HEK293 (cell line): ENCODE measurements at regions of chr18 and their contacts with region 1.

Region 1: DNA sequence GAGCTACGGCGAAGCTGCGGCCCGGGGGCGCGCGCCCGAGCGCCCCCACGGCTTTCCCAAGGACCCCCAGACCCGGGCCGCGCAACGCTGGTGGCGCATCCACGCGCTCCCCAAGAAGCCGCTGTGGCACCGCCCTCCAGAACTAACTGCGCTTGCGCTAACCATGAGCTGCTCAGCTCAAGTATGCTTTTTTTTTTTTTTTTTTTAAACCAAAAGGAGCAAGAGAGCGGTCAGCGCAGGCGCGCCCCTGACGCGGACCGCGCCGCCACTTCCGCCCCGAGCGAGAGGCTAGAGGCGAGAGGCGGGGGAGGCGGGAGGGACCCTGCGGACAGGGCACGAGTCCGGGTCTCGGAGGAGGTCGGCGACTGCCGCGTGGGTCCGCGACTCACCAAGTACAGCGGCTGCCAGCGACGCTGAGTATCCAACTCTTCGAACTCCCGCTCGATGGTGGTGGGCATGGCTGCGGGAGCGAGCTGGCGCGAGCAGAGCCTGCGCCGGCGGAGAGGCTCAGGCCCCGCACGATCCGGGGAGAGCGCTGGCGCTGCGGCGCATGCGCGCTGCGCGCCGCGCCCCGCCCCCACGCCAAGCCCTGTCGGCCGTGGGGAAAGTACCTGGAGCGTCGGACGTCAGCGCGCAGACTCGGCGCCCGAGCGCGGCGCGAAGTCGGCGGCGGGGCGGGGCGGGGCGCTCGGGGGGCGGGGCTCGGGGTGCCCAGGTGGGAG is at the start of gene PTPN2:
- H3K4me3 ChIP-seq: peak within 1 kb of the TSS; percentile 84
- H3K27ac ChIP-seq: peak within 1 kb of the TSS; percentile 95
- H3K4me1 ChIP-seq: peaks cover 17% of the 10 kb centered on the region
- CTCF ChIP-seq: no peak

Region 2: GRCh38 chr18:12308386-12309100 is 575.3 kb before region 1 on chr18:
- CTCF ChIA-PET with region 1: no interaction called
- POLR2A ChIA-PET with region 1: interaction called, 11 read pairs
- H3K4me3 ChIP-seq: peak overlapping the region; percentile 70
- H3K27ac ChIP-seq: peak overlapping the region; percentile 80; the same call in 1 of the 2 replicates
- H3K4me1 ChIP-seq: no peaks in the 10 kb centered on the region
- CTCF ChIP-seq: no peak

Region 3: DNA sequence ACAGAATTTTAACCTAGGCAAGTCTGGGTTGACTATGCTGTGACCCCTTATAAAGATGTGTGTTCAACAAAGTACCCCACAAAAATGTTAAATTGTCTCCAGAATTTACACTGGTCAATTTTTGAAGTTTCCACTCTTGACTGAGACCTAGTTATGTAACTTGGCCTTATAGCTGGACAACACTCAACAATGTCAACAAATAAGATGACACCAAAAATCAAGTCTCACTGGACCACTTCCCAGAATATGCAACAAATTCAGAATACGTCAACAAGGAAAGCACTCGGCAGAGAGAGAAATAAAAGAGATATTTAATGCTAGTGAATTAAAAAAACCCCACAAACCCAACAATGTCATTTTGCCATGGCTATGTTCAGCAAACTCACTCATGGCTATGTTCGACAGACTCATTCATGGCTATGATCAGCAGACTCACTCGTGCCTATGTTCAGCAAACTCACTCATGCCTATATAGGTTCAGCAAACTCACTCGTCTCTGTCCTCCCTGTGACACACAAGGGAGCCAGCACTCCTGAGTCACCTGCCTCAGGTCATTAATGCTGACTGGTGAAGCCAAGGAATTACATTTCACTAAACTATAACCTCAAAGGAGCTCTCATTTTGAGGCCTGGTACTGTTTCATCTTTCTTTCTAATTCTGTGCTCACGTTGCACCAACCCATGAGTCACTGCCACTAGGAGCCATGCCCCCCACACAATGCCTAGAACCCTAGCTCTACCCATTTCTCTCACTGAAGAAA is 72.5 kb before region 1 on chr18:
- CTCF ChIA-PET with region 1: no interaction called
- POLR2A ChIA-PET with region 1: no interaction called
- H3K4me3 ChIP-seq: no peak overlapping the region
- H3K27ac ChIP-seq: no peak overlapping the region
- H3K4me1 ChIP-seq: no peaks in the 10 kb centered on the region
- CTCF ChIP-seq: no peak

Region 4: DNA sequence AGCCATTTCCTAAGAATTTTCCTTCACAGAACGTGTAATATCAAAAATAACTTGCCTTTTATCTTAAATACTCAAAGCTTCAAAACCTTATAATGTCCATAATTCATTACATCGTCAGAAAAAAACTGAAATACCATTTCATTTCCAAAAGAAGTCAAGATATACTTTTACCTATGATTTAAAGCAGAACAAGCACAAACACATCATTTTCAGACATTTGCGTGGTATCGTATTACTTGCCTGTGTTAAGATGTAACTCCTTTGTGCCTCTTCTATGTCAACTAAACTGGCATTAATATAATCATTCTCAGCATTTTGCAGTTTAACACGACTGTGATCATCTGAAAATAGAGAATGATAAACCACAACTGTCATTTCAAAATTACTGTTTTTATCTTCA is 47.3 kb before region 1 on chr18:
- CTCF ChIA-PET with region 1: no interaction called
- POLR2A ChIA-PET with region 1: interaction called, 10 read pairs
- H3K4me3 ChIP-seq: no peak overlapping the region
- H3K27ac ChIP-seq: no peak overlapping the region
- H3K4me1 ChIP-seq: peaks cover 29% of the 10 kb centered on the region
- CTCF ChIP-seq: no peak

Region 5: DNA sequence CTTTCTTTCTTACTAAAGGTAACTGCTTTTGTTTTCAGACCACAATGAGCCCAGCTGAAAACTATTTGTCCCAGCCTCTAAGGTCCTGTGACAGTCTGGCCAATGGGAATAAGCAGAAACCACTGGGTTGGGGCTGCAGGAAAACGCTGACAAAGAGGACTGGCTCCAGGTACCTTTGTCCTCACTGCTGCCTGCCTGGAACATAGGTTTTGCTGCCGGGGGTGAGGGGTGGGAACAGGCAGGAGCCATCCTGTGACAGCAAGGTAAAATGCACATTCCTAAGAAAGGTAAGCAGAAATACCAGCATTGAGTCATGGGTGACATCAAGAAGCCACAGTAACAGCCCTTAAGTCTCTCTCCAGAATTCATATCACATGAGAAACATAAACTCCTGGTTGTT is 21.4 kb before region 1 on chr18:
- CTCF ChIA-PET with region 1: interaction called, 6 read pairs
- POLR2A ChIA-PET with region 1: interaction called, 32 read pairs
- H3K4me3 ChIP-seq: no peak overlapping the region
- H3K27ac ChIP-seq: no peak overlapping the region
- H3K4me1 ChIP-seq: peaks cover 16% of the 10 kb centered on the region
- CTCF ChIP-seq: no peak

Region 6: GRCh38 chr18:12911025-12911928 is 27.4 kb after region 1 on chr18:
- CTCF ChIA-PET with region 1: no interaction called
- POLR2A ChIA-PET with region 1: interaction called, 14 read pairs
- H3K4me3 ChIP-seq: no peak overlapping the region
- H3K27ac ChIP-seq: no peak overlapping the region
- H3K4me1 ChIP-seq: peaks cover 9% of the 10 kb centered on the region; the same call in 1 of the 2 replicates
- CTCF ChIP-seq: no peak

Region 7: GRCh38 chr18:12947355-12948041 is 63.7 kb after region 1 on chr18 and contains the start of gene SEH1L:
- CTCF ChIA-PET with region 1: no interaction called
- POLR2A ChIA-PET with region 1: interaction called, 13 read pairs
- H3K4me3 ChIP-seq: peak within 1 kb of the TSS; percentile 73
- H3K27ac ChIP-seq: peak within 1 kb of the TSS; percentile 90
- H3K4me1 ChIP-seq: peaks cover 5% of the 10 kb centered on the region
- CTCF ChIP-seq: no peak